GM12878 (cell line): ENCODE measurements at regions of chr20 and their contacts with region 1.

Region 1: DNA sequence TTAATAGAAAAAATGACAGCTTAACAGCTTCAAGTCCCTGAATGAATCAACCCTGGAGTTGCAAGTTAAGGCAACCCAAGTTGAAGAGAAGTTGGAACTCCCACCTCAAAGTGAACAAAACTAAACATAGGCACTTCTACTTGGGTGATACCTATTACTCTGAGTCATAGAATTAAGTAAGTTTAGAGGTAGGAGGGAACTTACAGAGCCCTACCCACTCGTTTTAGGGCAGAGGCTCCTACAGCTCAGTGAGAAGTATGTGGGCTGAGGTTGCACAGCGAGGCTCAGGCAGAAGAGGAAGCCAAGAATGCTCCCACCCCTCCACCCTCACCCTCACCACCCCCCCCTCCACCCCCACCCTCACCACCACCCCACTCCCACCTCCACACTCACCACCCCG is 42.2 kb downstream of the NFATC2 start:
- DNase-seq: peak; percentile 37
- ATAC-seq: peak; percentile 89
- H3K4me3 ChIP-seq: no peak overlapping the region
- H3K27ac ChIP-seq: peak overlapping the region; percentile 34; the same call in 1 of the 2 replicates
- H3K4me1 ChIP-seq: peaks cover 51% of the 10 kb centered on the region
- H3K27me3 ChIP-seq: no peaks in the 10 kb centered on the region
- CTCF ChIP-seq: no peak
- EP300 ChIP-seq: no peak
- POLR2A ChIP-seq: no peak
- RAD21 ChIP-seq: no peak

Region 2: GRCh38 chr20:51428401-51429143 is 71.7 kb before region 1 on chr20:
- CTCF ChIA-PET with region 1: no interaction called
- POLR2A ChIA-PET with region 1: no interaction called
- RAD21 ChIA-PET with region 1: no interaction called
- SMC1A ChIA-PET with region 1: no interaction called
- in situ Hi-C with region 1: no loop called
- intact Hi-C with region 1: no loop called
- DNase-seq: no peak
- ATAC-seq: no peak
- H3K4me3 ChIP-seq: no peak overlapping the region
- H3K27ac ChIP-seq: no peak overlapping the region
- H3K4me1 ChIP-seq: peaks cover 23% of the 10 kb centered on the region
- H3K27me3 ChIP-seq: no peaks in the 10 kb centered on the region
- CTCF ChIP-seq: no peak
- EP300 ChIP-seq: no peak
- POLR2A ChIP-seq: no peak
- RAD21 ChIP-seq: no peak

Region 3: GRCh38 chr20:51512645-51513044 is 12.3 kb after region 1 on chr20:
- CTCF ChIA-PET with region 1: interaction called, 3 read pairs
- POLR2A ChIA-PET with region 1: no interaction called
- RAD21 ChIA-PET with region 1: interaction called, 4 read pairs
- SMC1A ChIA-PET with region 1: interaction called, 13 read pairs
- in situ Hi-C with region 1: no loop called
- intact Hi-C with region 1: no loop called
- DNase-seq: no peak
- ATAC-seq: no peak
- H3K4me3 ChIP-seq: no peak overlapping the region
- H3K27ac ChIP-seq: no peak overlapping the region
- H3K4me1 ChIP-seq: no peaks in the 10 kb centered on the region
- H3K27me3 ChIP-seq: no peaks in the 10 kb centered on the region
- CTCF ChIP-seq: no peak
- EP300 ChIP-seq: no peak
- POLR2A ChIP-seq: no peak
- RAD21 ChIP-seq: no peak